Ascending aorta (tissue), 2 donors: ENCODE measurements at regions of chr2 and their contacts with region 1.

Region 1: DNA sequence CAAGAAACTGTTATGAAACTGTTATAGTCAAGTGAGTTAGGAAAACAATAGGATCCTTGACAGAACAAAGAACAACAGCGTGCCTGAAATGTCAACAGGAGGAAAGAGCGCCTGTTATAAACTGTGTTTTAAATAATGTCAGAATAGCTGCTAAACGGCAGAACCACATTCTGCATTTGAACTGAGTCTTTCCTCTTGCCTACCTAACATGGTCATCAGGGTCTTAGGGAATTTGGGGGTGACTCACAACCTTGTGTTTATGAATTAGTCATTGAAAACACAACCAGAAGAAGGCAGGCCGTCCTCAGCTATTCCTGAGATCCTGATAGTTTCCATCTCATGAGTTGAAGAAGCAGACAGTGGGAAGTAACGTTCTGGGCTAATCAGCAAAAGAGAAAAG is 222.0 kb upstream of the FN1 start:
- DNase-seq: peak in 1 of 2 donors; percentile 78
- H3K4me3 ChIP-seq: no peak overlapping the region
- H3K27ac ChIP-seq: peak overlapping the region; percentile 76 to 80
- H3K4me1 ChIP-seq: peaks cover 3 to 31% of the 10 kb centered on the region in 2 donors
- H3K27me3 ChIP-seq: no peaks in the 10 kb centered on the region
- CTCF ChIP-seq: no peak

Region 2: GRCh38 chr2:215498431-215498830 is 159.4 kb before region 1 on chr2:
- intact Hi-C with region 1: no loop called
- DNase-seq: no peak
- H3K4me3 ChIP-seq: no peak overlapping the region
- H3K27ac ChIP-seq: peak overlapping the region; percentile 57
- H3K4me1 ChIP-seq: peaks cover 0 to 20% of the 10 kb centered on the region in 2 donors
- H3K27me3 ChIP-seq: no peaks in the 10 kb centered on the region
- CTCF ChIP-seq: no peak

Region 3: GRCh38 chr2:215611609-215612405 is 46.0 kb before region 1 on chr2:
- intact Hi-C with region 1: no loop called
- DNase-seq: no peak
- H3K4me3 ChIP-seq: no peak overlapping the region
- H3K27ac ChIP-seq: no peak overlapping the region
- H3K4me1 ChIP-seq: no peaks in the 10 kb centered on the region
- H3K27me3 ChIP-seq: no peaks in the 10 kb centered on the region
- CTCF ChIP-seq: no peak

Region 4: DNA sequence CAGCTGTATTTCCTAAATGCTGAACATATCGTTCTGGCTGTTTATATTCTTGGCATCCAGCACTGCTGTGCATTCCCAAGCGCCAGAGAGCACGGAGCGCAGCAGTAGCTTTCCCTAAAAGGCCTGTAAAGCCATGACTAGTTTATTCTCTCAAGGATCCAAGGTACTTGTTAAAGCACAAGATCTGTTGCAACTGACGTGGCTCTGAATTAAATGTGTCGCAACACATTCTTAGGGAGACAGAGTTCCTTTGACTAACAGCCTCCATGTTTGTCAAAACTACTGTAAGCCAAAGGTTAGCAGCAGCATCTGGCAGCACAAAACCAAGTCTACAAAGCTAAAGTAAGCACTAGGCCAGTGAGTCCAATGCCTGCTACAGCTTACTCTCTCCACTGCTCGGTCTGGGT is 33.4 kb before region 1 on chr2:
- intact Hi-C with region 1: loop called (anchors 1 kb)
- DNase-seq: peak; percentile 39 to 87
- H3K4me3 ChIP-seq: no peak overlapping the region
- H3K27ac ChIP-seq: peak overlapping the region; percentile 73 to 78
- H3K4me1 ChIP-seq: peaks cover 0 to 27% of the 10 kb centered on the region in 2 donors
- H3K27me3 ChIP-seq: no peaks in the 10 kb centered on the region
- CTCF ChIP-seq: no peak

Region 5: GRCh38 chr2:215693193-215693998 is 35.6 kb after region 1 on chr2:
- intact Hi-C with region 1: loop called (anchors 2 kb)
- DNase-seq: no peak
- H3K4me3 ChIP-seq: no peak overlapping the region
- H3K27ac ChIP-seq: peak overlapping the region; percentile 80 to 87
- H3K4me1 ChIP-seq: peaks cover 0 to 27% of the 10 kb centered on the region in 2 donors
- H3K27me3 ChIP-seq: no peaks in the 10 kb centered on the region
- CTCF ChIP-seq: no peak